Activated T-helper 2 cell treated with anti-CD3 and anti-CD28 coated beads, Interferon-gamma antibody, Interleukin-2, Interleukin-4, amounts not matched to agents 10 μg/mL and 5 μg/mL and 100 μg/mL, durations not matched to agents 14 hours and 24 hours and 36 hours (primary cell): ENCODE measurements at regions of chr2 and their contacts with region 1.

Region 1: GRCh38 chr2:16608661-16609643 is 56.7 kb downstream of the CYRIA start:
- DNase-seq: peak; percentile 79
- H3K4me3 Mint-ChIP-seq: peak overlapping the region; percentile 79
- H3K27ac Mint-ChIP-seq: peak overlapping the region; percentile 49
- H3K4me1 Mint-ChIP-seq: peaks cover 12% of the 10 kb centered on the region
- H3K27me3 Mint-ChIP-seq: no peaks in the 10 kb centered on the region

Region 2: DNA sequence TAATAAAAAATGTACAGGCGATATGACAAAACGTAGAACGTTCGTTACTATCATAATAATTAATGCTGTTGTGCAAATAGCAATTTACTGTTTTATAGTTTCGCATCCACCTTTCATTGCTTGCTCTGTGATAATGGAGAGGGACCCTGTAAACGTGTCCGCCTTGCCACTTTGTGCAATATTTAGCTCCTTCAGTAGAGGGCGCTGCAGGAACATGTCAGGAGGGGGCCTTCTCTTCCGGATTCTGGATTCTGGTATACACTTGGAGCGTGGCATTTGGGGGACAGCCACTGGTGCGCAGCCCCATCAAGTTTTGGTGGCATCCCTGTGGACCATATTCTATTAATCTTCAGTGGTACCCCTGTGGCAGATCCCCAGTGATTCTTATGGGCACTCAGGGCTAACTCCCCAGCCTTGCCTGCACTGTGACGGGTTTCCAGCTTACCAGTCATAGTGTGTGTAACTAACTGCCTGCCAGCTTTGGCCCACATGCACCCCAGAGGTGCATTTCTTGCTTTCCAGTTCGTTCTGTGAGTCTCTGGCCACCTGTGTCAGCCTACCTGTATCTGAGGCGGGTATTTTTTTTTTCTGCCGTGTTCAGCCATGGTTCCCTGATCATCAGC is 83.6 kb before region 1 on chr2:
- intact Hi-C with region 1: loop called (anchors 1 kb)
- DNase-seq: no peak
- H3K4me3 Mint-ChIP-seq: no peak overlapping the region
- H3K27ac Mint-ChIP-seq: no peak overlapping the region
- H3K4me1 Mint-ChIP-seq: no peaks in the 10 kb centered on the region
- H3K27me3 Mint-ChIP-seq: peaks cover 6% of the 10 kb centered on the region

Region 3: GRCh38 chr2:16553226-16553625 is 55.7 kb before region 1 on chr2:
- intact Hi-C with region 1: loop called (anchors 1 kb)
- DNase-seq: no peak
- H3K4me3 Mint-ChIP-seq: no peak overlapping the region
- H3K27ac Mint-ChIP-seq: no peak overlapping the region
- H3K4me1 Mint-ChIP-seq: no peaks in the 10 kb centered on the region
- H3K27me3 Mint-ChIP-seq: no peaks in the 10 kb centered on the region

Region 4: DNA sequence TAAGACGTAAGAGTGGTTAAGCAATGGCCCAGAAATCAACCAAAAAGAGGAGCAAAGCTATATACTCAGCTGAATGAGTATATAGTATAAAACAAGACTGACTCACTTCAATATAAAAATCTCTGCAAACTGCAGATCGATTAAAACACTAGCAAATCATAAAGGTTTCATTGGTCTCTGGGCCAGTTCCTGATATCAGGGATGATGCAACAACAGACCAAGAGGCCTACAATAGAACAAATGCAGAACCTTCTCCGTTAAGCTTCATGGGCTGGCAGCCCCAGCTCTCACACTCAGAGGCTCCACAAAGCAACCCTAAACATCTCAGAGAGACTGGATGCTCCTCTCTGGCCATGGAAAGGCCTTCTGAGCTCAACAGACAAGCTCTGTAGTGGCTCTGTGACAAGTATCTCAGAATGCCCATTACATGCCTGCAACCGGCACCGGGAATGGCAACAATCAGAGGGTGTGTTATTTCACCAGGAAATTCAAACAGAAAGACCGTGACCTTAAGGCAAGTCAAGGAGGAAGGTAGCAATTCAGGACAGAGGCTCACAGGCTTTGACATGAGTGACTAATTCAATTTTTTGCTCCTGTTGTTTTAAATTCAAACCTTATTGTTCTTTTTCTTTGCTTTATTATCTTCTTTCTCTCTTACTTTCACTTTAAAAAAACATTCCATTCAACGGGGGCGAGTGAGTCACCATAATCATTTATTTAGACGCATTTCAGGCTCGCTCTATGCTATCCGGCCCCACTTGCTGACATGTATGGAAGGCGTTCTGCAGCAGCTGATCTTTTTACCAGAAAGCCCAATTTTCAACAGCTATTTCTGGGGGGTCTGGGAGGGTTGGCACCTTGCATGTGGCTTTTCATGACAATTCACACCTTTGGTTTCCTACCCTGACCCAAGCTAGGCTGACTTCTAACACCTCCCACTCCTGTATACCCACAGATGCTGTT is 41.6 kb after region 1 on chr2:
- intact Hi-C with region 1: no loop called
- DNase-seq: no peak
- H3K4me3 Mint-ChIP-seq: no peak overlapping the region
- H3K27ac Mint-ChIP-seq: no peak overlapping the region
- H3K4me1 Mint-ChIP-seq: peaks cover 15% of the 10 kb centered on the region
- H3K27me3 Mint-ChIP-seq: no peaks in the 10 kb centered on the region

Region 5: DNA sequence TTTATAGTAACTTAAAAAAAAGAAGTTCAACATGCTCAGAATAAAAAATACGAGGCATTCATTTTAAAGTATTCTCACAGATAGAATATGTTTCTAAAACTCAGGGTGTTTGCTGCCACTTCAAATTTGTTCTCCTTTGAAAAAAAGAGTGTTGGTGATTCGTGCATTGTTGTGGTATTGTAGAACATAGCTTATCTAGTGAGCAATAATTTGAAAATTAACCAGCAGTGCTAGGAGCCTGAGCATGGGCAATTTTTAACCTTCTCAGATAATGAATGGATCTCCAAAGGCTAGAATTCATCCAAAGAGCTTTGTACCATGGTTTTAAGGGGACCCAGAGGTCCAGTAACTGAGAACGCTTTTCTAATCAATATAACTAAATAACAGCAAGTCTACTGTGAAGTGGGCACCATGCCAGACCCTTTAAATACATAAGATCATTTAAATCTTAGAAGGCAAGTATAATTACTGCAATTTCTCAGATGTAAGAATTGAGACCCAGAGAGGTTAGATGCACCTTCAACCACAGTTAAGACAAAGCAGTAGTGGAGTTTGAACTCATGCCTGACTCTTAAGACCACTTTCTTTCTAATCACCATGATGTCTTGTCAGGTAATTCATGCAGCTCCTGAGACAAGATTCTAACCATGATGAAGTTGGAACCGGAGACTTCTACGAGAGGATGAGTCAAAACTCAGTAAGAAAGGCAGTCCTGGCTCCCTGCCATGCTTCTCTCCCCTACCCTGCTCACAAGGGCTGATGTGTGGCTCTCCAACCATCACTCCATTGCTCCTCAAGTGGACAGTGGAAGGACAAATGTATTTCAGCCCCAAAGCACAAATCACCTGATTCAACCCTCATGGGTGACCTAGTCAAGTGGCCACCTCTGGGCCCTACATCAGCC is 53.2 kb after region 1 on chr2:
- intact Hi-C with region 1: no loop called
- DNase-seq: no peak
- H3K4me3 Mint-ChIP-seq: no peak overlapping the region
- H3K27ac Mint-ChIP-seq: no peak overlapping the region
- H3K4me1 Mint-ChIP-seq: peaks cover 25% of the 10 kb centered on the region
- H3K27me3 Mint-ChIP-seq: peaks cover 40% of the 10 kb centered on the region

Region 6: DNA sequence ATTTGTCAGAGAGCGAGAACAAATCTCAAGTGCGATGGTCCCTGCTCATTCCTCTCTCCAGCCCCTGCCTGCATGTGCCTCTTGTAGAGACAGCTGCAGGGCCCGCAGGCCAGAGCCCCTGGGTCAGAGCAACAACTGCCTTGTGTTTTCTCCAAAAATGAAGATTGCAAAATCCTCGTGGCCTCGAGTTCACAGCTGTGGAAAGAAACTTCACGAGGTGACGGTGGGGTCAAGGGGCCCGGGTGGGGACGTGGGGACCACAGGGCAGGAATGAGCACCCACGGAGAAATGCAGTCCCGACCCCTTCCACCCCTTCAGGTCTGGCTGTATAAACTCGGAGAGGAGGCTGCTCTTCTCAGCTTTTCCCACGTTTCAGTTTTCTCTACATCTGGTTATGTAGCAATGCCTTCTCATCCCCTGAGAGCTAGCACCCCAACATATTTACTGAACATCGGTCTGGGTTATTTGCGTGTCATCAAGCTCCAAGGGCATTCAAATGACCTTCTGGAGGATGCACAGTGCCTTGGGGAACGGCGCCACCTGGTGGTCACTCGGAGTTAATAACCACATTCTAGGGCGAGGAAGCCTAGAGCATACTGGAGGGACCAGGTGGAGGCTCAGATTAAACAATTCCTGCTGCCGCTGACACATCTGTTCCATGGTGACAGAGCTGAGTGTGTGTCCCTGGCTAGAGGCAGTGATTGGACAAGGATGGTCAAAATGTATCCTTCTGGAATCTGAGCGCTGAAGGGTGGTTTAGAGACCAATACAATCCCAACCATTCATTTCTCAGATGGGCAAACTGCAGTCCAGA is 148.1 kb after region 1 on chr2:
- intact Hi-C with region 1: loop called (anchors 1 kb)
- DNase-seq: peak; percentile 48
- H3K4me3 Mint-ChIP-seq: no peak overlapping the region
- H3K27ac Mint-ChIP-seq: no peak overlapping the region
- H3K4me1 Mint-ChIP-seq: no peaks in the 10 kb centered on the region
- H3K27me3 Mint-ChIP-seq: peaks cover 8% of the 10 kb centered on the region